Panc1 (cell line): ENCODE measurements at regions of chr3 and their contacts with region 1.

Region 1: DNA sequence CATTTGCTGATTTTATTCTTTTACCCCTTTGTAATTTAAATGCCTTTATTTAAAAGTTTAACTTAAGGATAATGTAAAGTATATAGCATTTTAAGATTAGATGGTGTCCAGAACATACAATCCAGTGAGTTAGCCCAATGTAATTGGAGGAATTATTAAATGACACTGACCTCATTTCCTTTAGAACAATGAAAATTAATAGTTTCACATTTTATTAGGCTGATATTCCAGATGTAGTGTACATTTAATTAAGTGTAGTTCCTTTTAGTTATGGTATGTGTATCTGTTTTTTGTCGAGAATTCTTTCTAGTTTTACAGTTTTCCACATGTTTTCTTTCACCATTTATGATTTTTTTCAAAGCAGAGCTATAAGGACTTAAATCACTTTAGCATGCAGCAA is 75.8 kb downstream of the RSRC1 start:
- DNase-seq: no peak
- ATAC-seq: no peak
- H3K4me3 ChIP-seq: no peak overlapping the region
- H3K27ac ChIP-seq: no peak overlapping the region
- H3K4me1 ChIP-seq: no peaks in the 10 kb centered on the region
- H3K27me3 ChIP-seq: no peaks in the 10 kb centered on the region
- CTCF ChIP-seq: no peak

Region 2: DNA sequence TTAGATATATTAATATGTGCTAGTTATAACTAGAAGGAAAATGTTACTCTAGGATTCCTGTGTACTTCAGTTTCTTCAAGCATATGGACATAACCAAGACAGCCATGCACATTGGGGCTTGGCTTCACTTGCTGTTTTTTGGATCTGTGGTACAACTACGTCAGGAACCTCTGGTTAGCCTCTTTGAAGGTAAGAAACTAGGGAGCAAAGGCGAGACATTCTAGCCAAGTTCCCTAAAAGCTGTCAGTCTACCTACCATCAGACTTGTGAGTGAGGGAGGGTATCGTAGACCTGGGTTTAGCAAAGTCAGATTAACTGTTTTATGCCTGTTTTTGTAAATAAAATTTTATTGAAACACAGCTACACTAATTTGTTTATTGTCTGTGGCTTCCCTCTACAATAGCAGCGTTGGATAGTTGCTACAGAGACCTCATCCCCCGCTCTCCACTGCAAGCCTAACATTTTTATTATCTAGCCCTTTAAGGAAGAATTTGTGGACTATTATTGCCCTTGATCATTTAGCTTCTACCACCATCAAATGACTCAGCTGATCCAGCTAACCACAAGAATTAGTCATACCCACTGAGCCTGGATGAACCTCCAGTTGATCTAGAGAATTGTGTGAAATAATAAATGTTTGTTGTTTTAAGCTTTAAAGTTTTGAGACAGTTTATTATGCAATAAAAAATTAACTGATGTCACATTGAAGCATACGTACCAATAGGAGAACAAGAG is 17.8 kb before region 1 on chr3:
- CTCF ChIA-PET with region 1: no interaction called
- POLR2A ChIA-PET with region 1: no interaction called
- in situ Hi-C with region 1: no loop called
- intact Hi-C with region 1: no loop called
- DNase-seq: peak; percentile 88
- ATAC-seq: peak; percentile 98
- H3K4me3 ChIP-seq: no peak overlapping the region
- H3K27ac ChIP-seq: peak overlapping the region; percentile 44; the same call in 1 of the 2 replicates
- H3K4me1 ChIP-seq: peaks cover 17% of the 10 kb centered on the region; the same call in 1 of the 2 replicates
- H3K27me3 ChIP-seq: no peaks in the 10 kb centered on the region
- CTCF ChIP-seq: no peak

Region 3: DNA sequence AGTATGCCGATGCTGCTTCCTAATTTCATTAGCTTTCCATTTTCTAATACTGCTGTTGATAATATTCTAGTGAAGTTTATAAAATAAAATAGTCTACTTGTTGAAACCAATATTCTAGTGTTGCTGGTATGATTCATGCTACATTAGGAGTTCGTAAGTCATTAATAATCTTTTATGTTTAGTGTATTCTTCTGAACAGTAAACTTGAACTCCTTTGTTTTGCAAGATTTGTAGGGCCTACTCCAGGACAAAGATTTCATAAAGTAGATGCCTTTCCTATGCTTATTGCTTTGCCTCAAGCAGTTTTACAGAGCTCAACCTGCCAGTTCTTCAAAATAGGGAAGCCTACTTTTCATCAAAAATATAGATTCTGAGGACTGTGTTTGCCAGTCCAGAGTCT is 35.7 kb after region 1 on chr3:
- CTCF ChIA-PET with region 1: no interaction called
- POLR2A ChIA-PET with region 1: no interaction called
- in situ Hi-C with region 1: no loop called
- intact Hi-C with region 1: loop called (anchors 1 kb)
- DNase-seq: no peak
- ATAC-seq: no peak
- H3K4me3 ChIP-seq: no peak overlapping the region
- H3K27ac ChIP-seq: no peak overlapping the region
- H3K4me1 ChIP-seq: no peaks in the 10 kb centered on the region
- H3K27me3 ChIP-seq: no peaks in the 10 kb centered on the region
- CTCF ChIP-seq: no peak